ENCODE measurements at regions of chr5 and their contacts with region 1.

Region 1: DNA sequence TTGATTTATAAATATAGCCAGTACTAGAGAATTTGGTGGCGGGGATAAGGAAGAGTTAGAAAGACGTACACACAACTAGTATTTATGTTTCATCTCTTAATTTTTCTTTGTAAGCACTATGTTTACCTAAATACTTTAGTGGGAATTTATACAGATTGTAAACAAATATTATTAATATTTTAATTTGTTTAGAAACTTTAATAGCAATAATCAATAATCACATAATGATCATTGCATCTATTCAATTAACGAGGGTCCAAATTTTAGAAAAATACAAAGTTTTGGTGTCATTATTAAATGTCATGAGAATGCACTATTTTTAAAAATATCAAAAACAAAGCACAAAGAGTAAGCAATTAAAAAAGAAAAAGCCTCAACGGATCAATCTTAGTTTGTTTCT is 1613.1 kb upstream of the NUDT12 start:
- DNase-seq: no peak
- ATAC-seq: no peak
- H3K4me3 ChIP-seq: no peak overlapping the region
- H3K27ac ChIP-seq: no peak overlapping the region
- H3K4me1 ChIP-seq: no peaks in the 10 kb centered on the region
- H3K27me3 ChIP-seq: no peaks in the 10 kb centered on the region
- CTCF ChIP-seq: no peak
- POLR2A ChIP-seq: no peak
- RAD21 ChIP-seq: no peak

Region 2: DNA sequence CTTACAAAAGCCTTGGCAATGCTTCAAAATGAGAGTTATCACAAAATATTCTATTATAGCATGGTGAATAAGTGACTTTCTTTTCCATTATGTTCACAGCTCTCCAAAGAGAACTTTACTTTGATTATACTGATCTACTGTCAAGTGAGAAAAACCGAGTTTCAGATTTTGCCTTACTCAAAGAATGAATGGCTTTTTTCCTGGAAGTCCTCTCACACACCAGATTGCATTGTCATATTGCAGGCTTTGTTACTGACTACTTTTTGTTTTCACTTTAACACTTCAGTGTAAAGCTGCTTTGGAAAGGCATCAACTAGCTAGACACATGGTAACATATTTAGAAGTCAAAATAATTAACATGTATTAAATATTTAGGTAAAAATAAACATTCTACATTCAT is 847.9 kb before region 1 on chr5:
- CTCF ChIA-PET with region 1: no interaction called
- POLR2A ChIA-PET with region 1: no interaction called
- dilution Hi-C with region 1: no loop called
- in situ Hi-C with region 1: no loop called
- intact Hi-C with region 1: loop called (anchors 5 kb)
- DNase-seq: no peak
- ATAC-seq: no peak
- H3K4me3 ChIP-seq: no peak overlapping the region
- H3K27ac ChIP-seq: no peak overlapping the region
- H3K4me1 ChIP-seq: no peaks in the 10 kb centered on the region
- H3K27me3 ChIP-seq: no peaks in the 10 kb centered on the region
- CTCF ChIP-seq: no peak
- POLR2A ChIP-seq: no peak
- RAD21 ChIP-seq: no peak

Measured in IMR-90 (cell line).